ENCODE measurements at regions of chrX and their contacts with region 1.

Region 1: DNA sequence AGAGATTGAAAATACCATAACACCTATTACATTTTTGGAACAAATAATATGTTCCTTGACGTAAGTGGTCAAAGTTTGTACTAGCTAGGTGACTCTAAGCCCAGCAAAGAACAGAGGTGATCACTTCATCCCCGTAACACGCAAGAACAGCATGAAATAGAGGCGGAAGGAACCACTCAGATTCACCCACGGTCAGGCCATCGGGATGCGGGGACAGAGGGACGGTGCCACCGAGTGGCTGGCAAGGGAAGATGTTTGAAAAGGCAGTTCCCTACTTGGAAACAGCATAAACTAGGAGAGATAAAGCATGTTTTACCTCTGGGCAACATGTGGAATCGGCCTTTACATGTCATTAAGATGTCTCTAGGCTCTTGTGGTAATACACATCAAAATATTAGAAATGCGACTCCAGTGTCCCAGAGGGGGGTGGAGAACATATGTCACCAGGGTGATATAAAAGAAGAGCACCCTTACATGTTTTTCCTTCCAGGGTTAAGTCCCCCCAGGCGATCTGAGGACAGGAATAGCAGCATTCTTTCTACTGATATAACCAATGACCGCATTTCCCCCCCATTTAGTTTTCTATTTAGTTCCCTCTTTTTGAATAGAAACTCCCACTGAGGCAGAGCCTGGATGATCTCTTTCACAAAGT is 84.0 kb downstream of the PHKA2 start:
- DNase-seq: no peak
- H3K4me3 ChIP-seq: no peak overlapping the region
- H3K27ac ChIP-seq: no peak overlapping the region
- H3K4me1 ChIP-seq: no peaks in the 10 kb centered on the region
- H3K27me3 ChIP-seq: no peaks in the 10 kb centered on the region
- CTCF ChIP-seq: no peak
- EP300 ChIP-seq: no peak
- POLR2A ChIP-seq: no peak

Region 2: GRCh38 chrX:18410043-18410442 is 489.9 kb before region 1 on chrX:
- intact Hi-C with region 1: loop called in 2 of 4 experiments (anchors 10 kb)
- DNase-seq: no peak
- H3K4me3 ChIP-seq: no peak overlapping the region
- H3K27ac ChIP-seq: no peak overlapping the region
- H3K4me1 ChIP-seq: no peaks in the 10 kb centered on the region
- H3K27me3 ChIP-seq: no peaks in the 10 kb centered on the region
- CTCF ChIP-seq: no peak
- EP300 ChIP-seq: no peak
- POLR2A ChIP-seq: no peak

Region 3: GRCh38 chrX:18674788-18675735 is 224.9 kb before region 1 on chrX:
- intact Hi-C with region 1: loop called in 1 of 4 experiments (anchors 10 kb)
- DNase-seq: peak; percentile 71 to 85 (median 82)
- H3K4me3 ChIP-seq: peak overlapping the region; percentile 57
- H3K27ac ChIP-seq: peak overlapping the region; percentile 68 to 73
- H3K4me1 ChIP-seq: no peaks in the 10 kb centered on the region
- H3K27me3 ChIP-seq: no peaks in the 10 kb centered on the region
- CTCF ChIP-seq: no peak
- EP300 ChIP-seq: no peak
- POLR2A ChIP-seq: peak; percentile 53

Region 4: GRCh38 chrX:19237901-19238300 is 338.0 kb after region 1 on chrX:
- intact Hi-C with region 1: no loop called
- DNase-seq: no peak
- H3K4me3 ChIP-seq: no peak overlapping the region
- H3K27ac ChIP-seq: no peak overlapping the region
- H3K4me1 ChIP-seq: no peaks in the 10 kb centered on the region
- H3K27me3 ChIP-seq: no peaks in the 10 kb centered on the region
- CTCF ChIP-seq: no peak
- EP300 ChIP-seq: no peak
- POLR2A ChIP-seq: no peak